H1 (cell line): ENCODE measurements at regions of chr5 and their contacts with region 1.

Region 1: DNA sequence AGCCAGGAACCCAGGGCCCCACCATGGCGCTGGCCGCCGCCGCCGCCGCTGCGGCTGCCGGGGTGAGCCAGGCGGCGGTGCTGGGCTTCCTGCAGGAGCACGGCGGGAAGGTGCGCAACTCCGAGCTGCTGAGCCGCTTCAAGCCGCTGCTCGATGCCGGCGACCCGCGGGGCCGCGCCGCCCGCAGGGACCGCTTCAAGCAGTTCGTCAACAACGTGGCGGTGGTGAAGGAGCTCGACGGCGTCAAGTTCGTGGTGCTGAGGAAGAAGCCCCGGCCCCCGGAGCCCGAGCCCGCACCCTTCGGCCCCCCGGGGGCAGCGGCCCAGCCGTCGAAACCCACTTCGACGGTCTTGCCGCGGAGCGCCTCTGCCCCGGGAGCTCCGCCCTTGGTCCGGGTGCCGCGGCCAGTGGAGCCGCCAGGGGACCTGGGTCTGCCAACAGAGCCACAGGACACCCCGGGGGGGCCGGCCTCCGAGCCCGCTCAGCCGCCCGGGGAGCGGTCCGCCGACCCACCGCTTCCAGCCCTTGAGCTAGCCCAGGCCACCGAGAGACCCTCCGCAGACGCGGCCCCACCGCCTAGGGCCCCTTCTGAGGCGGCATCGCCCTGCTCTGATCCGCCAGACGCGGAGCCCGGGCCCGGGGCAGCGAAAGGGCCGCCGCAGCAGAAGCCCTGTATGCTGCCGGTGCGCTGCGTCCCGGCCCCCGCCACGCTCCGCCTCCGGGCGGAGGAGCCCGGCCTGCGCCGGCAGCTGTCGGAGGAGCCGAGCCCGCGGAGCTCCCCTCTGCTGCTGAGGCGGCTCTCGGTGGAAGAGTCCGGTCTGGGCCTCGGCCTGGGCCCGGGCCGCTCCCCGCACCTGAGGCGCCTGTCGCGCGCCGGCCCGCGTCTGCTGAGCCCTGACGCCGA is 749 bp downstream of the SOWAHA start:
- DNase-seq: peak in 1 of 2 experiments; percentile 80
- H3K4me3 ChIP-seq: peak overlapping the region; percentile 10 to 52 (median 28); a peak in 7 of 8 replicates
- H3K27ac ChIP-seq: no peak overlapping the region
- H3K4me1 ChIP-seq: peaks cover 0 to 3% (median 0%) of the 10 kb centered on the region in 4 experiments; a peak in 1 of 7 replicates
- H3K27me3 ChIP-seq: peaks cover 34 to 54% (median 46%) of the 10 kb centered on the region in 4 experiments
- CTCF ChIP-seq: no peak
- EP300 ChIP-seq: no peak
- POLR2A ChIP-seq: no peak
- RAD21 ChIP-seq: no peak

Region 2: DNA sequence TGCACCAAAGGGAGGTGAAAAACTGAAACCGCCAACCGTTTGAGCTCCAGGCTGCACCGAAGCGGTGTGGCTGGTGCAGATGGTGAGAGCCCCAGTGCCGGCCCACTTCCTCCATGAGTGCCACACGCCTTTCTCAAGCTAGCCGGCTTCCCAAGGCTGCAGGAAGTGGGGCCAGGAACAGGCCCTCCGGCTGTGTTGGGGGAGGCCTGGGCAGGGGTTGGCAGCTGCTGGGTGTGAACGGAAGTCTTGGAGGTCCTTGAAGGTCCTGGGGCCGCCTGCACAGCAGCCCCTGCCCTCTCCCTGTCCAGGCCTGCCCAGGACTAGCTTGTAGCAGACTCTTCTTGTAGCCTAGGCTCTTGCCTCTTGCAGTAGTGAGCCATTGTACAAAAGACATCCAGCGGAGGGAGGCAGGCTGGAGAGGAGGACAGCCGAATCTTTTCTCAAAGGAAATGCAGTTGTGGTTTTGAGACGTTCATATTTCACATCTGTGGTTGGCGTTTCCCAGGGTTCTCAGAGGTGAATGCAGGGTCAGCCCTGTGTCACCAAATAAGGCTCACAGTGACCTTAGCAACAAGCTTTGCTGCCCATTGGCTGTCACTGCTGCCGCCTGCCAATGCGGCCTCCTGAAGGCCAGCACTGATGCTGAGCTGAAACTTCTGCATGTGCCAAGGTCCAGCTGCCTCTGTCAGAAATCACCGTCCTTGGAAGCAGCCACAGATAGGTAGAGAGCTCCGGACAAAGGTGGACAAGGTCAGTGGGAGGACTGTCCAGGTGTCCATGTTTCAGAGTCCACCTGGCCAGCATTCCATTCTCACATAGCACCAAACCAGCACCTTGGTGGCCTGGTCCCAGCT is 347.2 kb before region 1 on chr5:
- CTCF ChIA-PET with region 1: no interaction called
- POLR2A ChIA-PET with region 1: no interaction called
- DNase-seq: no peak
- H3K4me3 ChIP-seq: no peak overlapping the region
- H3K27ac ChIP-seq: no peak overlapping the region
- H3K4me1 ChIP-seq: peaks cover 6 to 19% (median 11%) of the 10 kb centered on the region in 4 experiments
- H3K27me3 ChIP-seq: no peaks in the 10 kb centered on the region
- CTCF ChIP-seq: no peak
- EP300 ChIP-seq: peak in 1 of 2 experiments; percentile 7; a peak in 1 of 3 replicates
- POLR2A ChIP-seq: no peak
- RAD21 ChIP-seq: no peak

Region 3: DNA sequence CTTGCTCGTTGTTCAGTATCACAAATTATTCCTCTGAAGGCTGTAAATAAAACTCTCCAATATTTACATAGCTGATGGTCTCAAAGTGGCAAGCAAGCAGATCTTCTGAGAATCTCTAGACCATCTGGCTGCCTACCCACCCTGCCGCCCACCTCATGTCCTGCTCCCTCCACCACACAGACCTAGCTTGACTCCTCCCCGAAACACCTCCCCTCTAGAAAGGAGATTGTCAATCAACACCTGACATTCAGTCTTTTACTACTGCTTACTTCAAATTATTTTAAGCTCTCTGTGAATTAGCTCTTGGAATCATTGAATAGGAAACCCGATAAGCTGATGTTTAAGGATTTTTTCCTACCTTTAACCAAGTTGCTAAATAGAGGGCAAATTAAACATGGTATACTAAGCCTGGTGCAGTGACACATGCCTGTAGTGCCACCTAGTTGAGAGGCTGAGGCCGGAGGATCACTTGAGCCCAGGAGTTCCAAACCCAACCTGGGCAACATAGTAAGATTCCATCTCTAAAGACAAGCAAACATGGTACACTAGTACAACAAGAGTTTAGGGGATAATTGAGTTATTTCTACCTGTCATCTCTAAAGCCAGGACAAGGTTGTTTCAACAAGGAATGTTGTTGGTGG is 11.7 kb before region 1 on chr5:
- CTCF ChIA-PET with region 1: interaction called, 82 read pairs
- POLR2A ChIA-PET with region 1: interaction called, 4 read pairs
- DNase-seq: no peak
- H3K4me3 ChIP-seq: no peak overlapping the region
- H3K27ac ChIP-seq: no peak overlapping the region
- H3K4me1 ChIP-seq: peaks cover 0 to 3% (median 1%) of the 10 kb centered on the region in 4 experiments; a peak in 5 of 7 replicates
- H3K27me3 ChIP-seq: peaks cover 0 to 1% (median 0%) of the 10 kb centered on the region in 4 experiments; a peak in 1 of 7 replicates
- CTCF ChIP-seq: peak in 2 of 3 experiments; percentile 9 to 13; a peak in 2 of 4 replicates
- EP300 ChIP-seq: no peak
- POLR2A ChIP-seq: no peak
- RAD21 ChIP-seq: peak; percentile 22 to 41; a peak in 2 of 4 replicates